Cardiac septum (tissue), 1 donor: ENCODE measurements at regions of chr14 and their contacts with region 1.

Region 1: DNA sequence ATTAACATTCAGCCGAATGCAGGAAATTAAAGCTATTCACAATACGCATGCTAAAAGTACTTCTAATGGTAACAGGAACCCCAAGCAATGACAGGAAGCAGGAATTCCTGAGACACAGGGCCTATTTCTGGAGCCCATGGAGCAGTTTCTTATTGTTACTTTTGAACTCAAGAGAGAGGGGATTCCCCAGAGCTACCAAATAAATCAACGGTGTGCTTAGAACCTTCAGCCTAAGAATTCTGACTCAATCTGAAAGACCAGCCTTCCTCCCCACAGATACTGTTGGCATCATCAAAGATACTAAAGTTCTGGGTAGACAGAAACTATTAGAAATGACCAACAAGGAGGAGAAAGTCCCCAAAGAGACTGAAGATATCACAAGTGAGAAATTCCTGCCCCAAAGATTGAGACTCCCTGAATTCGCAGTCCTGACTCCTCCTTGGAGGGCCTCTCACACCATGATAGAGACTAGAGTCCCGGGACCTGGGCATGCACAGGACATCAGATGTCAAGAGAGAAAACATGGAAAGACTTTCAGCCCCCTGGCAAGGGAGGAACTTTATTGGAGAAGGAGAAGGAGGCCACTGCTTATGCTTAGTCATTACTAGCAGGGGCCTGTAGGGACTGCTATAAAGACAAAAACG is 32.7 kb downstream of the RTRAF start:
- DNase-seq: no peak

Region 2: GRCh38 chr14:51922624-51923023 is 99.5 kb before region 1 on chr14:
- intact Hi-C with region 1: no loop called
- DNase-seq: no peak

Region 3: DNA sequence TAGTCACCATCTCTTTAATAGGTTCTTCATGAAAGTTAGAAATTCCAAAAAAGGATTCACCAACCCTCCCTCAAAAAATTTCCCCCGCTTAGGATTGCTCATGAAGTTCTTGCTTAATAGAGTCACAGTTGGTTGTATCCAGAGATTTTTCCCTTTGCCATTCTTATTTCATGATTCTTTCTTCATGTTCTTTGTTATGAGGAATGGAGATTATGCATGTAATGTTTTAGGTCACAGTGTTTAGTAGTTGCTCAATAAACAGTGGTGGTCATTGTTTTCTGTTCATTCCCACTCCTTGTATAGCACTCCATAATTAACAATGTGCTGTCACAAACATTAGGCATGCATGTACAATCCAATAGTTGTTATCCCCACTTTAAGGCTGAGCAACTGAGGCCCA is 83.9 kb before region 1 on chr14:
- intact Hi-C with region 1: no loop called
- DNase-seq: no peak

Region 4: DNA sequence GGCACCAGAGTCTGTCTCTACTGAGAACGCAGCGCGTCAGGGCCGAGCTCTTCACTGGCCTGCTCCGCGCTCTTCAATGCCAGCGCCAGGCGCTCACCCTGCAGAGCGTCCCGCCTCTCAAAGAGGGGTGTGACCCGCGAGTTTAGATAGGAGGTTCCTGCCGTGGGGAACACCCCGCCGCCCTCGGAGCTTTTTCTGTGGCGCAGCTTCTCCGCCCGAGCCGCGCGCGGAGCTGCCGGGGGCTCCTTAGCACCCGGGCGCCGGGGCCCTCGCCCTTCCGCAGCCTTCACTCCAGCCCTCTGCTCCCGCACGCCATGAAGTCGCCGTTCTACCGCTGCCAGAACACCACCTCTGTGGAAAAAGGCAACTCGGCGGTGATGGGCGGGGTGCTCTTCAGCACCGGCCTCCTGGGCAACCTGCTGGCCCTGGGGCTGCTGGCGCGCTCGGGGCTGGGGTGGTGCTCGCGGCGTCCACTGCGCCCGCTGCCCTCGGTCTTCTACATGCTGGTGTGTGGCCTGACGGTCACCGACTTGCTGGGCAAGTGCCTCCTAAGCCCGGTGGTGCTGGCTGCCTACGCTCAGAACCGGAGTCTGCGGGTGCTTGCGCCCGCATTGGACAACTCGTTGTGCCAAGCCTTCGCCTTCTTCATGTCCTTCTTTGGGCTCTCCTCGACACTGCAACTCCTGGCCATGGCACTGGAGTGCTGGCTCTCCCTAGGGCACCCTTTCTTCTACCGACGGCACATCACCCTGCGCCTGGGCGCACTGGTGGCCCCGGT is 245.6 kb after region 1 on chr14 and contains the start of gene PTGDR:
- intact Hi-C with region 1: loop called (anchors 10 kb)
- DNase-seq: peak; percentile 83
- total RNA-seq, gene PTGDR: 0.51 TPM